Activated CD4-positive, alpha-beta memory T cell treated with anti-CD3 and anti-CD28 coated beads for 36 hours (primary cell): ENCODE measurements at regions of chr4 and their contacts with region 1.

Region 1: GRCh38 chr4:41882625-41883347 is 52.4 kb upstream of the TMEM33 start:
- DNase-seq: peak; percentile 68
- H3K4me3 Mint-ChIP-seq: peak overlapping the region; percentile 38
- H3K27ac Mint-ChIP-seq: no peak overlapping the region
- H3K4me1 Mint-ChIP-seq: peaks cover 21% of the 10 kb centered on the region
- H3K27me3 Mint-ChIP-seq: peaks cover 47% of the 10 kb centered on the region

Region 2: DNA sequence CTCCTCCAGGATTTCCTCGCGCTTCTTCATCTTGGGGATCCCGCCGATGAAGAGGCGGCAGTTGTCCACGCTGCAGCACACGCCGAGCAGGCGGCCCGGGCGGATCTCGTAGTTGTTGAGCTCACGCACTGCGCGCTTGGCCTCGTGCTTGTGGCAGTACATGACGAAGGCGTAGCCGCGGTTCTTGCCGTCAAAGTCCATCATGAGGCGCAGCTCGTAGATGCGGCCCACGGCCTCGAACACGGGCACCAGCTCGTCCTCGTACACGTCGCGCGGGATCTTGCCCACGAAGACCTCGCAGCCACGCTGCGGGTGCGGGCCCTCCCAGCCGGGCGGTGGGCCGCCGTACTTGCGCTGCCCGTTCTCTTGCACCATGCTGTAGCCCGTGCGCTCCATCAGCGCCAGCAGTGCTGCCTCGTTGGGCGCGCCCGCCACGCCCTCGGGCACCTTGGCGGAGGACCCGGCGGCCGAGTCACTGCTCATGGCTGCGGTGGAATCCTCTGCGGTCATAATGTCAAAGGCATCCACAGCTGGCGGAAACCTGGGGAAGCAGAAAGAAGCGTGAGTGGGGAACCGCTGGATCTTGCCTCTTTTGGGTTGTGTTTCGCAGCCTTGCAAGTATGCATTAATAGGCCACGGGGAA is 1444.3 kb before region 1 on chr4:
- CTCF ChIA-PET with region 1: no interaction called
- POLR2A ChIA-PET with region 1: no interaction called
- intact Hi-C with region 1: no loop called
- DNase-seq: no peak
- H3K4me3 Mint-ChIP-seq: no peak overlapping the region
- H3K27ac Mint-ChIP-seq: no peak overlapping the region
- H3K4me1 Mint-ChIP-seq: peaks cover 15% of the 10 kb centered on the region
- H3K27me3 Mint-ChIP-seq: peaks cover 1% of the 10 kb centered on the region

Region 3: GRCh38 chr4:41692717-41693345 is 190.0 kb before region 1 on chr4:
- CTCF ChIA-PET with region 1: interaction called, 10 read pairs
- POLR2A ChIA-PET with region 1: no interaction called
- intact Hi-C with region 1: loop called (anchors 1 kb)
- DNase-seq: peak; percentile 52
- H3K4me3 Mint-ChIP-seq: no peak overlapping the region
- H3K27ac Mint-ChIP-seq: no peak overlapping the region
- H3K4me1 Mint-ChIP-seq: peaks cover 3% of the 10 kb centered on the region
- H3K27me3 Mint-ChIP-seq: peaks cover 3% of the 10 kb centered on the region

Region 4: GRCh38 chr4:41751449-41752061 is 131.2 kb before region 1 on chr4:
- CTCF ChIA-PET with region 1: interaction called, 5 read pairs
- POLR2A ChIA-PET with region 1: no interaction called
- intact Hi-C with region 1: loop called (anchors 2 kb)
- DNase-seq: no peak
- H3K4me3 Mint-ChIP-seq: no peak overlapping the region
- H3K27ac Mint-ChIP-seq: no peak overlapping the region
- H3K4me1 Mint-ChIP-seq: no peaks in the 10 kb centered on the region
- H3K27me3 Mint-ChIP-seq: peaks cover 74% of the 10 kb centered on the region

Region 5: GRCh38 chr4:41865306-41865980 is 17.3 kb before region 1 on chr4:
- CTCF ChIA-PET with region 1: interaction called, 4 read pairs
- POLR2A ChIA-PET with region 1: no interaction called
- intact Hi-C with region 1: loop called (anchors 2 kb)
- DNase-seq: no peak
- H3K4me3 Mint-ChIP-seq: no peak overlapping the region
- H3K27ac Mint-ChIP-seq: no peak overlapping the region
- H3K4me1 Mint-ChIP-seq: peaks cover 17% of the 10 kb centered on the region
- H3K27me3 Mint-ChIP-seq: peaks cover 56% of the 10 kb centered on the region